CD8-positive, alpha-beta T cell (primary cell): ENCODE measurements at regions of chr6 and their contacts with region 1.

Region 1: DNA sequence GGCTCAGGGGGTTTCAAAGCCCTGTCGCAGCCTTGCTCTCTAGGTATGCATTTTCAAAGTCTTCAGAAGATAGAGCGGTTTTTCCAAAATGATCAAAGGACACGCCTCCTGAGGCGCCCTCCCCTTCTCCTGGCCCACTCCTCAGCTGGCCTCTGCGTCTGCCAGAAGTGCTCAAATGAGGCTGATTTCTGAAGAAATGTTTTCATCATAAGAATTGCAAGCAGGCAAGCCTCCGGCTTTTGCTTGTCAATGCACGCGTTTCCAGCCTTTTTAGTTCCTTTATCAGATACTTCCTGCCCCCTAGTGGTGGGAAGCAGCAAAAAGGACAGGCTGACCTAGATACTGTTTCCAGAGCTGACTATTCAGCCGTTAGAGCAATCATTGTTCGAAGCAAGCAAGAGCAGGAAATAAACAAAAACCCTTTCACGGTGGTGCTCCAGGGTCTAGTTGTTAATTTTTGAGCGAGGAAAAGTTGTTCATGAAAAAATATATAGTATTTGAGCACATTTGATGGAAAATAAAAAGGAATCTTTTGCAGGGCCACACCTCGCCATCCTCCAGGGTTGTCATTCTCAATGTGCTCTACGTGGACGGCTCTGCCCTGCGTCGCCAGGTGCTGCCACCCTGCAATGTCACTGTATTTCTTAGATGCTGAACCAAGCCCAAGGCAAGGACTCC is 93.4 kb upstream of the ASF1A start:
- DNase-seq: peak; percentile 61 to 90 (median 85)
- ATAC-seq: peak; percentile 85
- H3K4me3 ChIP-seq: peak overlapping the region in 1 of 2 experiments; percentile 28
- H3K4me3 Mint-ChIP-seq: peak overlapping the region; percentile 70
- H3K27ac ChIP-seq: peak overlapping the region in 1 of 2 experiments; percentile 38
- H3K27ac Mint-ChIP-seq: peak overlapping the region; percentile 94
- H3K4me1 ChIP-seq: peaks cover 23% of the 10 kb centered on the region
- H3K4me1 Mint-ChIP-seq: peaks cover 42% of the 10 kb centered on the region
- H3K27me3 ChIP-seq: no peaks in the 10 kb centered on the region
- H3K27me3 Mint-ChIP-seq: no peaks in the 10 kb centered on the region
- CTCF ChIP-seq: peak; percentile 91

Region 2: GRCh38 chr6:116902629-116903028 is 1897.9 kb before region 1 on chr6:
- CTCF ChIA-PET with region 1: no interaction called
- POLR2A ChIA-PET with region 1: no interaction called
- intact Hi-C with region 1: no loop called
- DNase-seq: no peak
- ATAC-seq: no peak
- H3K4me3 ChIP-seq: no peak overlapping the region
- H3K4me3 Mint-ChIP-seq: no peak overlapping the region
- H3K27ac ChIP-seq: no peak overlapping the region
- H3K27ac Mint-ChIP-seq: no peak overlapping the region
- H3K4me1 ChIP-seq: no peaks in the 10 kb centered on the region
- H3K4me1 Mint-ChIP-seq: no peaks in the 10 kb centered on the region
- H3K27me3 ChIP-seq: no peaks in the 10 kb centered on the region
- H3K27me3 Mint-ChIP-seq: no peaks in the 10 kb centered on the region
- CTCF ChIP-seq: no peak

Region 3: DNA sequence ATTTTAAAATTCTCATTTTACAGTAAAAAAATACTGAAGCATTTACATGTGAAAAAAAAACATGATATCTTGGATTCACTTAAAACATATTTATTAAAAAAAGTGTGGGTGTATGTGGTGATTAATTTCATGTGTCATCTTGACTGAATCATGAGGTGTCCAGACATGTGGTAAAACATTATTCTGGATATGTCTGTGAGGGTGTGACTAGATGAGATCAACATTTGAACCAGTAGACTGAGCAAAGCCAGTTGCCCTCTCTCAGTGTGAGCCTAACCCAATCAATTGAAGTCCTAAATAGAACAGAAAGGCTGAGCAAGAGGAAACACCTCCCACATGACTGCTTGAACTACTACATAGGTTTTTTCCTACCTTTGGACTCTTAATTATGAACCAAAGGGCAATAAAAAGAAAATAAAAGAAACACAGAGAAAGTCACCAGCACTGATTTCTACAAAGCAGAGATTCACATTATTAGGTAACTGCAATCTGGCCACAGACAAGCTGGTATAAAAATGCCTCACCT is 1625.6 kb before region 1 on chr6:
- CTCF ChIA-PET with region 1: no interaction called
- POLR2A ChIA-PET with region 1: no interaction called
- intact Hi-C with region 1: no loop called
- DNase-seq: no peak
- ATAC-seq: no peak
- H3K4me3 ChIP-seq: no peak overlapping the region
- H3K4me3 Mint-ChIP-seq: no peak overlapping the region
- H3K27ac ChIP-seq: no peak overlapping the region
- H3K27ac Mint-ChIP-seq: no peak overlapping the region
- H3K4me1 ChIP-seq: no peaks in the 10 kb centered on the region
- H3K4me1 Mint-ChIP-seq: no peaks in the 10 kb centered on the region
- H3K27me3 ChIP-seq: no peaks in the 10 kb centered on the region
- H3K27me3 Mint-ChIP-seq: no peaks in the 10 kb centered on the region
- CTCF ChIP-seq: no peak

Region 4: DNA sequence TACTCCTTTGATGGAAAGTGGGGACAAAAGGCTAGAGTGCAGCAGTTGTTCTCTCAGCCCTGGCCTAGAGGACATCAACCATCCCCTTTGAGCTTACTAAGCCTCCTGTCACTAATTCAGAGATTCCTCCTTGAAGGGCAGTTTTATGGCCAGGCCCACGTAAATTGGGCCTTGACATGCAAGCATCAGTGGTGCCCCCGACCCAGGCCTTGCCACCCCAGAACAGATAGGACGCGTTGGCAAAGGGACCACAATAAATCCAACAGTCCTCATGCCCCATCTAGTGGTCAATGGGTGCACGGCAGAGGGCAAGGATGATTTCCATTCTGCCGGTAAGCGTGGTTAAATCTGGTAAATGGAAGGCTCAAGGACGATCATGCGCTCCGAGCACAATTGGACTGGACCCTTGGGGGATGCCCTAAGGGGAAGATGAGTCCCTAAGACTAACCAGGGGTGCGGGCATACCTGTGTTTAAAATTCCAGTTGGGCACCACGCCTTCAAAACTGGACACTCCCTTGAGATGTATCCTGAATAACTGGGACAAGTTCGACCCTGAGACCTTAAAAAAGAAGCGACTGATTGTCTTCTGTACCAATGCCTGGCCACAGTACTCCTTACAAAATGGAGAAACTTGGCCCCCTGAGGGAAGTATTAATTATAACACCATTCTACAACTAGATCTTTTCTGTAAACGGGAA is 181.7 kb before region 1 on chr6:
- CTCF ChIA-PET with region 1: interaction called, 3 read pairs
- POLR2A ChIA-PET with region 1: no interaction called
- intact Hi-C with region 1: loop called in 1 of 2 experiments (anchors 5 kb)
- DNase-seq: peak; percentile 38 to 81 (median 66)
- ATAC-seq: peak; percentile 96
- H3K4me3 ChIP-seq: no peak overlapping the region
- H3K4me3 Mint-ChIP-seq: no peak overlapping the region
- H3K27ac ChIP-seq: no peak overlapping the region
- H3K27ac Mint-ChIP-seq: peak overlapping the region; percentile 83
- H3K4me1 ChIP-seq: peaks cover 7% of the 10 kb centered on the region
- H3K4me1 Mint-ChIP-seq: peaks cover 64% of the 10 kb centered on the region
- H3K27me3 ChIP-seq: no peaks in the 10 kb centered on the region
- H3K27me3 Mint-ChIP-seq: no peaks in the 10 kb centered on the region
- CTCF ChIP-seq: peak; percentile 79

Region 5: GRCh38 chr6:118697554-118697953 is 103.0 kb before region 1 on chr6:
- CTCF ChIA-PET with region 1: interaction called, 5 read pairs
- POLR2A ChIA-PET with region 1: no interaction called
- intact Hi-C with region 1: loop called in 1 of 2 experiments (anchors 2 kb)
- DNase-seq: peak in 2 of 9 experiments; percentile 31 to 51
- ATAC-seq: peak; percentile 51
- H3K4me3 ChIP-seq: no peak overlapping the region
- H3K4me3 Mint-ChIP-seq: no peak overlapping the region
- H3K27ac ChIP-seq: no peak overlapping the region
- H3K27ac Mint-ChIP-seq: peak overlapping the region; percentile 1
- H3K4me1 ChIP-seq: peaks cover 44% of the 10 kb centered on the region
- H3K4me1 Mint-ChIP-seq: peaks cover 85% of the 10 kb centered on the region
- H3K27me3 ChIP-seq: no peaks in the 10 kb centered on the region
- H3K27me3 Mint-ChIP-seq: no peaks in the 10 kb centered on the region
- CTCF ChIP-seq: no peak

Region 6: GRCh38 chr6:118776607-118777549 is 23.7 kb before region 1 on chr6:
- CTCF ChIA-PET with region 1: interaction called, 21 read pairs
- POLR2A ChIA-PET with region 1: no interaction called
- intact Hi-C with region 1: loop called (anchors 1 to 2 kb)
- DNase-seq: peak; percentile 32 to 82 (median 61)
- ATAC-seq: peak; percentile 89
- H3K4me3 ChIP-seq: no peak overlapping the region
- H3K4me3 Mint-ChIP-seq: no peak overlapping the region
- H3K27ac ChIP-seq: no peak overlapping the region
- H3K27ac Mint-ChIP-seq: peak overlapping the region; percentile 38
- H3K4me1 ChIP-seq: peaks cover 20% of the 10 kb centered on the region
- H3K4me1 Mint-ChIP-seq: peaks cover 28% of the 10 kb centered on the region
- H3K27me3 ChIP-seq: no peaks in the 10 kb centered on the region
- H3K27me3 Mint-ChIP-seq: no peaks in the 10 kb centered on the region
- CTCF ChIP-seq: peak; percentile 82